ENCODE measurements at regions of chr17 and their contacts with region 1.

Region 1: DNA sequence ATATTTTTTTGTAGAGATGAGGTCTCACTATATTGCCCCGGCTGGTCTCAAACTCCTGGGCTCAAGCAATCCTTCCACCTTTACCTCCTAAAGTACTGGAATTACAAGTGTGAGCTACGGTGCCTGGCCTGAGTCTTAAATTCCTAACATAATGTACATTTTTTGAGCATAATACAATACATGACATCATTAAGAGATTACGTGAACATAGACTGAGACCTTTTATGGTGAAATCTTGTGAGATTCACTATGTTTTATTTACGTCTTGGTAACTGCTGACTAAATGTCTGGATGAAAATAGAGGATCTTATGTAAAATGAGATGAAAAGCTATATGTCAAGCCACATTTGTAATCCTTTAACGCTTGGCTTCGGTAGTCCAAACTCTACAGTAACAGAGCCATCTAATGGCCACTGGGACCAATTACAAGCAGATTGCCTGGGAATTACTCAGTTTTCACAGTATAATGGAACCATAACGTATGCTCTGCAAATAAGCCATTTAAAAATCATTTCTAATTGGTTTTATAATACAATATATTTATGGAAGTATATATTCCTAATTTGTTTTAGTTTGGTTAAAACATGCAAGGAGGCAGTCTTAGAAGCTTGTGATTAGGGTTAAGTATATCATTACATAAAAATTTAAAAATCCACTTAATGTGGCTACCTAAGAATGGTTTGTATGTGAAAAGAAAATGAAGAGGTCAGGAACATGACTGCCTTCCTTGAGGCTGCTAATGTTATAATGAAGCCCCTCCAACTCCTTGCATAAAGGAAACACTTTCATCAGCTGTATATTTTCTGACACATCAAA is 8.1 kb upstream of the EFCAB13 start:
- DNase-seq: peak; percentile 29
- H3K4me3 Mint-ChIP-seq: no peak overlapping the region
- H3K27ac Mint-ChIP-seq: no peak overlapping the region
- H3K4me1 Mint-ChIP-seq: no peaks in the 10 kb centered on the region
- H3K27me3 Mint-ChIP-seq: peaks cover 9% of the 10 kb centered on the region

Region 2: DNA sequence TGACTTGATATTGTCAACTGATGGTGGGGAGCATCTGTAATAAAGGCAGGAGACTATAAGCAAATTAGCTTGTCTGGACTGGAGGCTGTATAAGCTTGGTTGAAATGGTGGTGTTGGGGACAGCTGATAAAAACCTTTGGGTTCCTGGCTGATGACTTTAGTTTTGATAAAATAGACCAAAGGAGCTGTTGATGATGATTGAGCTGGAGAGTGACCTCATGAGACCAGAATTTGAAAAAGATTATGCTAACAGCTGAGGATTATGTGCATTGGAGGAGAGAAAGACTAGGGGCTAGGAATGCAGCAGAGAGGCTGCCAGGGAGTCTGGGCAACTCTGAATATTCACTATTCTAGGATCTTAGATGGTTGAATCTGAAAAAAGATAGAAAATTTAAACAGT is 117.8 kb before region 1 on chr17:
- CTCF ChIA-PET with region 1: no interaction called
- POLR2A ChIA-PET with region 1: no interaction called
- DNase-seq: no peak
- H3K4me3 Mint-ChIP-seq: no peak overlapping the region
- H3K27ac Mint-ChIP-seq: no peak overlapping the region
- H3K4me1 Mint-ChIP-seq: peaks cover 21% of the 10 kb centered on the region
- H3K27me3 Mint-ChIP-seq: peaks cover 6% of the 10 kb centered on the region

Region 3: DNA sequence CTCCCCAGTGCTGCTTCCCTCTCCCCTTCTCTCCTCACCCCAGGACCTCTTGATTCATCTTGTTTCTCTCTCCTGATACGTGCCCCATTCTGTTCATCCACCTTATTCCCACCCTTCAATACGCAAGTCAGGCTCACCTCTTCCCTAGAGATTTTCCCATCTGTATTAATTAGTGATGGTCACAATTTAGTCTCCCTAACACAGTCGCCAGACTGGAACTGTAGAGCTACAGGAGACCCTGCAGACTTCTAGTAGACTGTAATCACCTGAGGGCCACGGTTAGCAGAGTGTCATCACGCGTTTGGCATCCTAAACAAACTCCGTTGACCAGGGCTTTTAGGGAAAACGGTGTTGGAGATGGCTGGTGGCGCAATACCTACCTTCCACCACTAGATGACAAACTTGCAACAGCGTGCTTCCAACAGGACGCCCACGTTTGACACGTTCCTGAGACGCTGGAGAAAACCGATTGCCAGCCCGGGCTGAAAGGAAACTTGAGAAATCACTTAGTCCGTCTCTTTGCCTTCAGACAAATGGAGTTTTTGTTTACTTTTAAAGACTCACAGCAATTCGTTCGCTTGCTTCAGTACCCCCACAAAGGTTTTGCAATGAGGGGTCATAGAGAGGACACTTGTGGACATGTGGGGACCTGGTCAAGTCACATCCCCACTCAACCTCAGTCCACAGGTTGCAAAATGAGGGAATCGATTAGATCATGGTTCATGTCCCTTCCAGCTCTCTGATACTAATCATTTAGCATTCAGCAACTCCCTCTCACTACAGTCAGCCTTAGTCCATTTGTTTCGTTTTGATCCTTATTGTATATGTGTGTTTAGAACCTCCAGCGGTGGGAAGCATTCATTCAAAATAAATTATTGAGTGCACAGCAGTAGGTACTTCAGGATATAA is 85.9 kb before region 1 on chr17:
- CTCF ChIA-PET with region 1: interaction called, 44 read pairs
- POLR2A ChIA-PET with region 1: no interaction called
- DNase-seq: peak; percentile 76
- H3K4me3 Mint-ChIP-seq: peak overlapping the region; percentile 34
- H3K27ac Mint-ChIP-seq: no peak overlapping the region
- H3K4me1 Mint-ChIP-seq: peaks cover 13% of the 10 kb centered on the region
- H3K27me3 Mint-ChIP-seq: peaks cover 10% of the 10 kb centered on the region

Region 4: GRCh38 chr17:47295062-47295845 is 20.4 kb before region 1 on chr17:
- CTCF ChIA-PET with region 1: no interaction called
- POLR2A ChIA-PET with region 1: no interaction called
- DNase-seq: no peak
- H3K4me3 Mint-ChIP-seq: no peak overlapping the region
- H3K27ac Mint-ChIP-seq: no peak overlapping the region
- H3K4me1 Mint-ChIP-seq: peaks cover 3% of the 10 kb centered on the region
- H3K27me3 Mint-ChIP-seq: peaks cover under 1% of the 10 kb centered on the region

Region 5: DNA sequence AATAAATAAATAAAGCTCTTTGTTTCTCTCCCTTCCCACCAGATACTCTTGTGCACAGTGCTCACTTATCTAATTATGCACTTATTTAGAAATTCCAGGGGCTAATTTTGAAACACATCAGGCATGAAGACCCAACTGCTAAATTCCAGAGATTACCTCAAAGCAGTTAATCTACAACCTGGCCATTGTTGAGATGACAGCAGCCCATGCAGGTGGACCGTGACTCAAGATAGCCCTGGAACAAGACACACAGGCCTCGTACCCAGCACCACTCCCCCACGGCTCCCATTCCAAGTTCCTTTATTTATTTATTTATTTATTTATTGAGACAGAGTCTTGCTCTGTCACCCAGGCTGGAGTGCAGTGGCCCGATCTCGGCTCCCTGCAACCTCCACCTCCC is 155.2 kb after region 1 on chr17:
- CTCF ChIA-PET with region 1: no interaction called
- POLR2A ChIA-PET with region 1: no interaction called
- DNase-seq: no peak
- H3K4me3 Mint-ChIP-seq: no peak overlapping the region
- H3K27ac Mint-ChIP-seq: no peak overlapping the region
- H3K4me1 Mint-ChIP-seq: no peaks in the 10 kb centered on the region
- H3K27me3 Mint-ChIP-seq: no peaks in the 10 kb centered on the region